ENCODE measurements at regions of chr19 and their contacts with region 1.

Region 1: GRCh38 chr19:18868380-18869022 is 27.5 kb downstream of the CERS1 start:
- DNase-seq: no peak
- ATAC-seq: no peak
- H3K4me3 ChIP-seq: no peak overlapping the region
- H3K4me3 Mint-ChIP-seq: no peak overlapping the region
- H3K27ac ChIP-seq: no peak overlapping the region
- H3K27ac Mint-ChIP-seq: no peak overlapping the region
- H3K4me1 ChIP-seq: peaks cover 2 to 26% of the 10 kb centered on the region in 2 experiments
- H3K4me1 Mint-ChIP-seq: peaks cover 10 to 16% (median 15%) of the 10 kb centered on the region in 3 donors
- H3K27me3 ChIP-seq: peaks cover 0 to 20% of the 10 kb centered on the region in 2 experiments
- H3K27me3 Mint-ChIP-seq: peaks cover 5 to 10% of the 10 kb centered on the region in 2 donors

Region 2: GRCh38 chr19:18975011-18975410 is 106.5 kb after region 1 on chr19:
- CTCF ChIA-PET with region 1: no interaction called
- POLR2A ChIA-PET with region 1: interaction called in 1 of 2 experiments, 10 read pairs
- DNase-seq: no peak
- ATAC-seq: no peak
- H3K4me3 ChIP-seq: no peak overlapping the region
- H3K4me3 Mint-ChIP-seq: no peak overlapping the region
- H3K27ac ChIP-seq: no peak overlapping the region
- H3K27ac Mint-ChIP-seq: no peak overlapping the region
- H3K4me1 ChIP-seq: no peaks in the 10 kb centered on the region
- H3K4me1 Mint-ChIP-seq: peaks cover 0 to 4% (median 0%) of the 10 kb centered on the region in 3 donors
- H3K27me3 ChIP-seq: peaks cover 0 to 27% of the 10 kb centered on the region in 2 experiments
- H3K27me3 Mint-ChIP-seq: peaks cover 5 to 13% of the 10 kb centered on the region in 2 donors